ENCODE measurements at regions of chr20 and their contacts with region 1.

Region 1: DNA sequence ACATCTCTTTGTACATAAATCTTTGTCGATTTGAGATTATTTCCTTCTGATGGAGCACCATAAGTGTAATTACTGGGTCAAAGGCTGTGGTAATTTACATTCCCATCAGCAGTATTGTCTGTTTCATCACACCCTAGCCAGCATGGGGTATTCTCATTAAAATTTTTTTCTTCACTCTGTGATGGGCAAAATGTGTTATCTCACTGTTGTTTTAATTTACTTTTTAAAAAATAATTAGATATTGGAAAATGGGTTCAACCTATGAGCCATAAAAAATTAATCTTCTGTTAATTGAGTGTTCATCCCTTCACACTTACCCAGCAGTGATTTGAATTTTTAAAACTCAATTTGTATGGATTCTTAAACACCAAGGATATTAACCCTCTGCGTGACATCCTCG is 44.0 kb upstream of the NNAT start:
- DNase-seq: no peak
- H3K4me3 ChIP-seq: no peak overlapping the region
- H3K27ac ChIP-seq: no peak overlapping the region
- H3K4me1 ChIP-seq: peaks cover 0 to 3% (median 0%) of the 10 kb centered on the region in 4 experiments; a peak in 1 of 7 replicates
- H3K27me3 ChIP-seq: no peaks in the 10 kb centered on the region; a peak in 1 of 7 replicates
- CTCF ChIP-seq: no peak
- EP300 ChIP-seq: no peak
- POLR2A ChIP-seq: no peak
- RAD21 ChIP-seq: no peak

Region 2: DNA sequence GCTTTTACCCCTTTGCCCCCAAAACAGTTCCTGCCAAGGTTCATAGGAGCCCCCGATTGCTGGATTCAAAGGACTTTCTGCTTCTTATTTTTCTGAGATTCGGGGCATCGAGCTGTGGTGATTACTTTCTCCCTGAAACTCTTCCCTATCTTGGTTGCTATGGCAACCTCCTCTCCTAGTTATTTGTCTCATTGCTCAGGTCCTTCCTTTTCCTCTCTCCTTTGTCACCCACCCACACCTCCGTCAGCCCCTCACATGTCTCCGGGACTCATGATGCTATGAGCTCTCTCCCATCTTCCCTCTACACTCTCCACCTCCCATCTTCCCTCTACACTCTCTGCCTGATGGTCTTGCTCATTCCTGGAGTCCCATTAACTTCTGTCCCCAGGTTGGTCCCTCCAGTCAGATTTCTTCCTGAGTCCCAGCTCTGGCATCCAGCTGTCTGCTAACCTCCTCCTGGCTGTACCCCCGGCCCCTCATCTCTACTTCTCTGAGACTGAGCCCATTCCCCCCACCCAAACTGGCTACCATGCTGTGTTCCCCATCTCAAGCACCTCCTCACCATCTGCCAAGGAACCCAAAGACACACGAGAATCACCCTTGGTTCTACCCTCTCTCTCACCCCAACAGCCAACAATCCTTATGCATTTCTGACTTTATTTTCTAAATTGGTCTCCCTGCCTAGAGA is 13.8 kb after region 1 on chr20:
- CTCF ChIA-PET with region 1: interaction called, 7 read pairs
- POLR2A ChIA-PET with region 1: interaction called, 13 read pairs
- DNase-seq: no peak
- H3K4me3 ChIP-seq: no peak overlapping the region
- H3K27ac ChIP-seq: no peak overlapping the region
- H3K4me1 ChIP-seq: peaks cover 0 to 4% (median 0%) of the 10 kb centered on the region in 4 experiments; a peak in 2 of 7 replicates
- H3K27me3 ChIP-seq: no peaks in the 10 kb centered on the region; a peak in 2 of 7 replicates
- CTCF ChIP-seq: no peak
- EP300 ChIP-seq: no peak
- POLR2A ChIP-seq: no peak
- RAD21 ChIP-seq: no peak